Panc1 (cell line): ENCODE measurements at regions of chr2 and their contacts with region 1.

Region 1: DNA sequence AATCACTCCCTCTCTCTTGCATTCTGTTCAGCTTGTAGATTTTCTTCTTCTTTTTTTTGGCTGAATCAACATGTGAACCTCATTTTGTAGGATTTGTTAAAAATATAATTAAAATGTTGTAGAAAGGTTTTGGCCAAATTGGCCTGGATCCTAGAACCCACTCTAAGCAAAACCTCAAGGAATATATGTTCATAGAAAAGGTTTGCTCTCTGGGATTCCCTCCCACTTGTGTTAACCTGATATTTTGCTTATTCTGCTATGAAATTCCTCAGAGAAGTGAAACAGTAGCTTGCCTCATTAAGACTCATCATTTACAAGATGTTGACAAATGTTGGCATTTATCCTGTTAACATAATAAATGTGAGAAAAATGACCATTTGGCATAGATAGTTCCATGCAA is 456.7 kb downstream of the TMEM182 start:
- DNase-seq: no peak
- ATAC-seq: no peak
- H3K4me3 ChIP-seq: no peak overlapping the region
- H3K27ac ChIP-seq: no peak overlapping the region
- H3K4me1 ChIP-seq: no peaks in the 10 kb centered on the region
- H3K27me3 ChIP-seq: no peaks in the 10 kb centered on the region
- CTCF ChIP-seq: no peak

Region 2: GRCh38 chr2:102114290-102114721 is 1104.2 kb before region 1 on chr2:
- CTCF ChIA-PET with region 1: no interaction called
- POLR2A ChIA-PET with region 1: no interaction called
- in situ Hi-C with region 1: no loop called
- intact Hi-C with region 1: no loop called
- DNase-seq: no peak
- ATAC-seq: no peak
- H3K4me3 ChIP-seq: no peak overlapping the region
- H3K27ac ChIP-seq: no peak overlapping the region
- H3K4me1 ChIP-seq: no peaks in the 10 kb centered on the region
- H3K27me3 ChIP-seq: no peaks in the 10 kb centered on the region
- CTCF ChIP-seq: no peak

Region 3: DNA sequence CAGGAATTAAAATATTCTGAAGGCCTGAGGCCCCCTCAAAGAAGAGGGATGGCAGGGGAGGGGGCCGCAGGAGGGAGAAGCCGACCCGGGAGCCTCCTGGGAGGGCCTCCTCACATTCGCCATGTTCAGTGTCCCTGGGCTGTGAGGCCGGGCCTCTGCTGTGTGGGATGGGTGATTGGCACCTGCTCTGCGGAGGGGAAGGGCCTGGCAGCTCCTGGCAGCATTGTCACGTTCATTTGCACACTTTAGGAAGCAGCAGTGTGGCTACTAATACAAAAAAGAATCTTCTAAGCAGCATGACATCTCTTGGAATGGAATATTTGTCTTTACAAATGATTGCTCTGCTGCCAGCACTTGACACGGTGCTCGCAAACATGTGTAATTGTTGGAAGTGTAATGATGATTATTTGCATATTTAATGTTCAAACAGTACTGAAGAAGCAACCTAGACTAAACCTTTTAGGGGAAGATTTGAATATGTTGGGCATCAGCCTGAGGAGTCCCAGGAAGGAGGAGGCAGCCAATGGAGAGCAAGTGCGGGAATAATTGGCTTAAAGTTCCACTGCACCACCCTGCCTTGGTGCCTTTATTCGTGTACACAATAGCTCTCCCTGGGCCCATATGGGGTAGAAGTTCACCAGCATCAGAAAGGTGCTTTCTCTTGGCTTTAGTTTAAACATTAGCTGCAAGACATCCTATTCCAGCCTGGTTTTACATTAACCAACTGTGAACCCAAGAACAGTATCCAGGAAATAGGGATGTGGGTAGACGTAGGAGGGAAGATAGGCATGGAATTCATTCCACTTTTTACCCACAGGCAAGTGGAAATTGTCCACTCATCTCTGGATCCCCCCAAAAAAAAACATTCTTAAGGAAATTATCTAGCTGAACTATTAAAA is 51.8 kb before region 1 on chr2:
- CTCF ChIA-PET with region 1: no interaction called
- POLR2A ChIA-PET with region 1: no interaction called
- in situ Hi-C with region 1: no loop called
- intact Hi-C with region 1: no loop called
- DNase-seq: no peak
- ATAC-seq: no peak
- H3K4me3 ChIP-seq: no peak overlapping the region
- H3K27ac ChIP-seq: no peak overlapping the region
- H3K4me1 ChIP-seq: no peaks in the 10 kb centered on the region
- H3K27me3 ChIP-seq: no peaks in the 10 kb centered on the region
- CTCF ChIP-seq: no peak

Region 4: DNA sequence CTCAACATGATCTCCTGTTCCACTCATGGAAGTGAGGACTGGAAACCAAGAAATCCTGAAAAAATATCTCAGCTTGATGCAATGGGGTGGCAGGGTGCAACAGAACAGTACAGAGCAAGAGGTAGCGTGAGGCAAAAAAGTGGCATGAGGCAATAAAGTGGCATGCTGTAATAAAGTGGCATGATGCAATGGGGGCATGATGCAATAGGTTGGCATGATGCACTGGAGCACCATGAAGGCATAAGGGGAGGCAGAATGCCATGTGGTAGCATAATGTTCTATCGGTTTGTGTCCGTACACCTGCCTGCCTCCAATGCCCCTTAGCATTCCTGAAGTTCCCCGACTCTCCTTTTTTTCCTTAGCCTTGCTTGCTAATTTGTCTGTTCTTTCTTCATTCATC is 191.7 kb after region 1 on chr2:
- CTCF ChIA-PET with region 1: no interaction called
- POLR2A ChIA-PET with region 1: interaction called, 11 read pairs
- in situ Hi-C with region 1: no loop called
- intact Hi-C with region 1: no loop called
- DNase-seq: no peak
- ATAC-seq: no peak
- H3K4me3 ChIP-seq: no peak overlapping the region
- H3K27ac ChIP-seq: no peak overlapping the region
- H3K4me1 ChIP-seq: no peaks in the 10 kb centered on the region
- H3K27me3 ChIP-seq: no peaks in the 10 kb centered on the region
- CTCF ChIP-seq: no peak

Region 5: GRCh38 chr2:104004821-104005220 is 786.3 kb after region 1 on chr2:
- CTCF ChIA-PET with region 1: no interaction called
- POLR2A ChIA-PET with region 1: no interaction called
- in situ Hi-C with region 1: no loop called
- intact Hi-C with region 1: no loop called
- DNase-seq: no peak
- ATAC-seq: no peak
- H3K4me3 ChIP-seq: no peak overlapping the region
- H3K27ac ChIP-seq: no peak overlapping the region
- H3K4me1 ChIP-seq: no peaks in the 10 kb centered on the region
- H3K27me3 ChIP-seq: no peaks in the 10 kb centered on the region
- CTCF ChIP-seq: no peak